H1 (cell line): ENCODE measurements at regions of chr16 and their contacts with region 1.

Region 1: DNA sequence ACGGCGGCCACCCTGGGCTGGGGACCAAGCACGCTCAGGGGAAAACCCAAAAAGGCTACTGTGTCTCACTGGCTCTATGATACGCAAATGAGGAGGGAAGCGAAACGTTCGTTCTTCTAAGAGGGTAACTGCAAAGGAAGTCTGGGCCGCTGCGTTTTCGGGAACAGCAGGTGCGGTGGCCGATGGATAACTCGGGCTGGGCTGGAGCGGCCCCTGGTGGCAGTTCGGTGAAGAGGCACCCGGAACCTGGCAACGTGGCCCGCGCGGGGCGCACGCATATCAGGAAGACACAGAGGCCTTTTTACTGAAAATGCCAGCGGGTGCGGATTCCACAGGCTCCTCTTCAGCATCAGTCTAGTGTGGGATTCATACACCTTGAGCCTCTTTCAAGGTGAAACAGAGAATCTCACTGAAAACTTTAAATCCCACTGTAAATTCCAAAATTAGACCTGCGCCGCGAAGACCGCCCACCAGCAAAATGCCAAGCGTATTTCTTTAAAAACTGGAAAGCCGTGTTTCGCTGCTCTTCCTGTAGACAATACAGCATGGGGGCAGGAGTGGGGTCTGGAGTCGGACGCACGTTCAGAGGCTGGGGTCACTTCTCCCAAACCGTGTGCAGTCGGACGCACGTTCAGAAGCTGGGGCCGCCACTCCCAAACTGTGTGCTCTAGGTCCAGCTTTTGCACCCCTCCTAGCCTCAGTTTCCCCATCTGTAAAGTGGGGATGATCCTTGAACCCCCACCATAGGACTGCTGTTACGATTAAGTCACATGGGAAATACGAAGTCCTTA is 44.4 kb upstream of the METTL9 start:
- DNase-seq: peak; percentile 62 to 98
- H3K4me3 ChIP-seq: peak overlapping the region in 1 of 4 experiments; percentile 50; a peak in 2 of 8 replicates
- H3K27ac ChIP-seq: no peak overlapping the region
- H3K4me1 ChIP-seq: no peaks in the 10 kb centered on the region
- H3K27me3 ChIP-seq: peaks cover 0 to 3% (median 3%) of the 10 kb centered on the region in 4 experiments; a peak in 2 of 7 replicates
- CTCF ChIP-seq: peak; percentile 91 to 97 (median 97)
- EP300 ChIP-seq: no peak
- POLR2A ChIP-seq: no peak
- RAD21 ChIP-seq: peak; percentile 96 to 97

Region 2: DNA sequence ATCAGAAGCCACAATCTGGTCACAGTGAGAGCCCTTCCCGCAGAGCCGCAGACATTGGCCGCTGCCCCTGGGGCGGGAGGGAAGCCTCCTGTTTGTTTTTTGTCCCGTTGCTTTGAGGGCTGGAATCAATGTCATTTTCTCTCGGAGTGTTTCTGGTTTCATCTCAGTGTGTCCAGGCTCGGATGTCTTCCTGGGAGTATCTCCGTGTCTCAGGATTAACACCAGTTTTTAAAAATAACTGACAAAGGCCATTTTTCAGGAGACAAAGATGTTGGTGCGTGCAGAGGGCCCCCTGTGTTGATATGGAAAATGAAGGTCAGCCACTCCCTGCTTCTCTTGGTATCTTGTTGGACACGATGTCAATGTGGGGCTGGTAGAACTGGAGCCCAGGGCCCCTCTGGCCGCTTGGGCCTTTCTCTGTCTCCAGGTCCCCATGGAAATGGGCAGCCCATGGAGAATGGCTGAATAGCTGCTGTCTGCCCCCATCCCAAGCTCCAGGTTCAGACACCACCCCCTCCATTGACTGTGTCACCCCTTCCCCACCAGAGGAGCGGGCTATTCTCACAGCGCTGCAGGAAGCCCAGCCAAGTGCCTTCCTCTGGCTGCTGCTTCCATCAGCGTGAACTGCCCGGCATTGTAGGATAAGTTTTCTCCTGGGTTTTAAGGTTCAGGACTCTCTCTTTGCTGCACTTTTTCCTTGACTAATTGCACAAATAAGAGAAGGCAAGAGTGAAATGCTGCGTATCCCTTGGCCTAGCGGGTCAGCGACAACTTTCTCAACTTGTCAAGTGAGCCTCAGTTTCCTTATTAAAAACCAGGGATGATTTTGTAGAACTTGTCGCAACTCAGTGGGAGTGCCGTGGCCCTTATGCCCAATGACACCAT is 27.8 kb before region 1 on chr16:
- CTCF ChIA-PET with region 1: interaction called, 12 read pairs
- POLR2A ChIA-PET with region 1: interaction called, 3 read pairs
- DNase-seq: no peak
- H3K4me3 ChIP-seq: no peak overlapping the region
- H3K27ac ChIP-seq: no peak overlapping the region
- H3K4me1 ChIP-seq: peaks cover 0 to 19% (median 9%) of the 10 kb centered on the region in 4 experiments; a peak in 6 of 7 replicates
- H3K27me3 ChIP-seq: no peaks in the 10 kb centered on the region
- CTCF ChIP-seq: no peak
- EP300 ChIP-seq: no peak
- POLR2A ChIP-seq: no peak
- RAD21 ChIP-seq: no peak

Region 3: DNA sequence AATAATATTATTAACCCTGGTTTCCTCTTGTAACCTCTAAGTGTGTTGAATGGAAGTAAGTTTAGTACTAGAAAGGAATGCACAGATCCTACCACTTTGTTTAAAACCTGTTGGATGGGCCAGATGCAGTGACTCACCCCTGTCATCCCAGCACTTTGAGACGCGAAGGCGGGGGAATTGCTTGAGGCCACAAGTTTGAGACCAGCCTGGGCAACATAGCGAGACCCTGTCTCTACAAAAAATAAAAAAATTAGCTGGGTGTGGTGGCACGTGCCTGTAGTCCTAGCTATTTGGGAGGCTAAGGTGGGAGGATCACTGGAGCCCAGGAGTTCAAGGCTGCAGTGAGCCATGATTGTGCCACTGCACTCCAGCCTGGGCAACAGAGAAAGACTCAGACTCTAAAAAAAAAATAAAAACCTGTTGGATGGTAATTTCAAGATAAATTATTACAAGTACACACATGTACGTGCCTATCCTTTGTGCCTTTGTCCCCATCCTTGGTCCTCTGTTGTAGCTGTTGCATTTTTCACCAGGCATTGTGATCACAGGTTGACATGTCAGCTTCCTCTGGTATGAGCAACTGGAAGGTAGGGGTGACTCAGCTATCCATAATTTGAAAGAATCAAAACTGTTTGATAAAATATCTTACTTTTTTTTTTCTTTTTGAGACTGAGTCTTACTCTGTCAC is 13.7 kb after region 1 on chr16:
- CTCF ChIA-PET with region 1: interaction called, 10 read pairs
- POLR2A ChIA-PET with region 1: no interaction called
- DNase-seq: no peak
- H3K4me3 ChIP-seq: no peak overlapping the region
- H3K27ac ChIP-seq: no peak overlapping the region
- H3K4me1 ChIP-seq: no peaks in the 10 kb centered on the region
- H3K27me3 ChIP-seq: no peaks in the 10 kb centered on the region
- CTCF ChIP-seq: no peak
- EP300 ChIP-seq: no peak
- POLR2A ChIP-seq: no peak
- RAD21 ChIP-seq: no peak

Region 4: GRCh38 chr16:21608639-21609328 is 53.8 kb after region 1 on chr16:
- CTCF ChIA-PET with region 1: no interaction called
- POLR2A ChIA-PET with region 1: no interaction called
- DNase-seq: no peak
- H3K4me3 ChIP-seq: no peak overlapping the region
- H3K27ac ChIP-seq: no peak overlapping the region
- H3K4me1 ChIP-seq: peaks cover 6 to 28% (median 11%) of the 10 kb centered on the region in 4 experiments; a peak in 6 of 7 replicates
- H3K27me3 ChIP-seq: no peaks in the 10 kb centered on the region
- CTCF ChIP-seq: no peak
- EP300 ChIP-seq: no peak
- POLR2A ChIP-seq: no peak
- RAD21 ChIP-seq: no peak

Region 5: DNA sequence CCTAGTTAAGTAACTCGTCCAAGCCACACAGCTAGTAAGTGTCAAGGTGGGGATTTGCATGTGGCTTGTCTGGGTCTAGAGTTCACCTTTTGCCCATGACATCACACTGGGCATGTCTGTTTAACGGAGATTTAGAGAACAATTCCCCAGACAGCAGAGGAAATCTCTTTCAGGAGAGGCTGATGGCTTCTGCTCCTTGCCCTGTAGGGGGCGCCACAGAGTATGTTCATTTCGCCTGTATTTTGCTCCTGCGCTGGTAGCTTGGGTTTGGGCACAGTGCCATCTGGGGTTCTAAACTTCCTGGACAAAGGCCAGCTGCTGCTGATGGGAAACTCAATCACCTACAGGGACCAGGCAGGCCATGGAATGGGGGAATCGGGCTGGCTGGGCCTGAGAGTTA is 129.2 kb after region 1 on chr16:
- CTCF ChIA-PET with region 1: no interaction called
- POLR2A ChIA-PET with region 1: no interaction called
- DNase-seq: peak in 1 of 2 experiments; percentile 82
- H3K4me3 ChIP-seq: no peak overlapping the region
- H3K27ac ChIP-seq: no peak overlapping the region
- H3K4me1 ChIP-seq: no peaks in the 10 kb centered on the region
- H3K27me3 ChIP-seq: no peaks in the 10 kb centered on the region
- CTCF ChIP-seq: peak; percentile 72 to 85 (median 75)
- EP300 ChIP-seq: no peak
- POLR2A ChIP-seq: no peak
- RAD21 ChIP-seq: peak; percentile 33 to 59; a peak in 3 of 4 replicates